Natural killer cell (primary cell): ENCODE measurements at regions of chr3 and their contacts with region 1.

Region 1: GRCh38 chr3:42581709-42582473 is at the start of gene SEC22C:
- DNase-seq: peak; percentile 93 to 97
- ATAC-seq: peak; percentile 89 to 96 (median 90)
- H3K4me3 ChIP-seq: peak within 1 kb of the TSS; percentile 77
- H3K4me3 Mint-ChIP-seq: peak within 1 kb of the TSS; percentile 93
- H3K27ac ChIP-seq: peak within 1 kb of the TSS; percentile 96
- H3K27ac Mint-ChIP-seq: peak within 1 kb of the TSS; percentile 96 to 97
- H3K4me1 ChIP-seq: peaks cover 9% of the 10 kb centered on the region
- H3K4me1 Mint-ChIP-seq: peaks cover 41 to 48% of the 10 kb centered on the region in 2 donors
- H3K27me3 ChIP-seq: no peaks in the 10 kb centered on the region
- H3K27me3 Mint-ChIP-seq: no peaks in the 10 kb centered on the region
- CTCF ChIP-seq: no peak
- total RNA-seq, gene SEC22C: 51.3 to 60.4 (median 55.9) TPM

Region 2: GRCh38 chr3:42600111-42600988 is 18.5 kb after region 1 on chr3 and contains the start of gene NKTR:
- intact Hi-C with region 1: loop called (anchors 1 kb)
- DNase-seq: peak; percentile 99
- ATAC-seq: peak; percentile 89 to 95 (median 90)
- H3K4me3 ChIP-seq: peak within 1 kb of the TSS; percentile 81
- H3K4me3 Mint-ChIP-seq: peak within 1 kb of the TSS; percentile 94
- H3K27ac ChIP-seq: peak within 1 kb of the TSS; percentile 92
- H3K27ac Mint-ChIP-seq: peak within 1 kb of the TSS; percentile 98
- H3K4me1 ChIP-seq: peaks cover 12% of the 10 kb centered on the region
- H3K4me1 Mint-ChIP-seq: peaks cover 31 to 35% of the 10 kb centered on the region in 2 donors
- H3K27me3 ChIP-seq: no peaks in the 10 kb centered on the region
- H3K27me3 Mint-ChIP-seq: no peaks in the 10 kb centered on the region
- CTCF ChIP-seq: no peak
- total RNA-seq, gene NKTR: 212 to 252 (median 217) TPM

Region 3: DNA sequence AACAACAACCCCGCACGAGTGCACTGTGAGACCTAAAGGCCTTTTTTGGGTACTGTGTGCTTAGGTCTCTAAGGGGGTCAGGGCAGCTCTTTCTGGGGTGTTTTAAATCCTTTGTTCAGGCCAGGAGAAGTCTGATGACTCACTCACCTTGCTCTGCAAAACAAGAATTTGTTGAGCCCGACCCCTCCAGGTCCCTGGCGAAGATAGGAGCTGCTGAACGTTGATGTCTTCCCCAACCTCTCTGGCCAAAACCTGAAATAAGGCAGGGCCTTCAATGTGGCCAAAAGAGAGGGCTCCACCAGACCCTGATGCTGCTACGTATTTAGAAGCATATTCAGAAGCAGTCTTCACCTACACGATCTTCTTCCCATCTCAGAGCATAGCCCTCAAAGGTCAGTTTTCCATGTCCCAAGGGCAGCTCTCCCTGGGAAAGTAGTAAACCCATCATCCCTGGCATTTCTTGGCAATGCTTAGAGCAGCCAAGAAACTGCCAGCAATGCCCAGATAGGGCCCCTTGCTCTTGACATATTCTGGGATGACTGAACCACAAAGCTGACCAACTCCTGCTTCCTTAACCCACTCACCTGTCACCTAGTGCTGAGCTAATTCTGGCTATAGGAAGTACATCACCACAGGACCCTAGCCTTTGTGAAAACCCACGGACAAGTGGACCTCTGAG is 164.0 kb after region 1 on chr3:
- intact Hi-C with region 1: loop called (anchors 2 kb)
- DNase-seq: no peak
- ATAC-seq: no peak
- H3K4me3 ChIP-seq: no peak overlapping the region
- H3K4me3 Mint-ChIP-seq: no peak overlapping the region
- H3K27ac ChIP-seq: no peak overlapping the region
- H3K27ac Mint-ChIP-seq: no peak overlapping the region
- H3K4me1 ChIP-seq: peaks cover 6% of the 10 kb centered on the region
- H3K4me1 Mint-ChIP-seq: no peaks in the 10 kb centered on the region
- H3K27me3 ChIP-seq: no peaks in the 10 kb centered on the region
- H3K27me3 Mint-ChIP-seq: no peaks in the 10 kb centered on the region
- CTCF ChIP-seq: no peak